ENCODE measurements at regions of chr12 and their contacts with region 1.

Region 1: GRCh38 chr12:98644711-98645402 is at the starts of genes APAF1 and IKBIP:
- DNase-seq: peak; percentile 94 to 98 (median 96)
- H3K4me3 ChIP-seq: peak within 1 kb of the TSS; percentile 92 to 93
- H3K4me3 Mint-ChIP-seq: peak within 1 kb of the TSS; percentile 97 to 99 (median 98)
- H3K27ac ChIP-seq: peak within 1 kb of the TSS; percentile 73
- H3K27ac Mint-ChIP-seq: peak within 1 kb of the TSS; percentile 82 to 97 (median 96)
- H3K4me1 ChIP-seq: peaks cover 24% of the 10 kb centered on the region
- H3K4me1 Mint-ChIP-seq: peaks cover 14 to 40% (median 20%) of the 10 kb centered on the region in 4 donors
- H3K27me3 ChIP-seq: no peaks in the 10 kb centered on the region
- H3K27me3 Mint-ChIP-seq: no peaks in the 10 kb centered on the region
- total RNA-seq, gene APAF1: 30.8 to 32.2 TPM
- total RNA-seq, gene IKBIP: 7.7 to 8.2 TPM

Region 2: GRCh38 chr12:98319716-98320425 is 325.0 kb before region 1 on chr12:
- CTCF ChIA-PET with region 1: no interaction called
- POLR2A ChIA-PET with region 1: no interaction called
- intact Hi-C with region 1: no loop called
- DNase-seq: no peak
- H3K4me3 ChIP-seq: no peak overlapping the region
- H3K4me3 Mint-ChIP-seq: no peak overlapping the region
- H3K27ac ChIP-seq: no peak overlapping the region
- H3K27ac Mint-ChIP-seq: no peak overlapping the region
- H3K4me1 ChIP-seq: no peaks in the 10 kb centered on the region
- H3K4me1 Mint-ChIP-seq: no peaks in the 10 kb centered on the region
- H3K27me3 ChIP-seq: no peaks in the 10 kb centered on the region
- H3K27me3 Mint-ChIP-seq: peaks cover 0 to 2% of the 10 kb centered on the region in 2 donors

Region 3: GRCh38 chr12:98397316-98398105 is 247.3 kb before region 1 on chr12:
- CTCF ChIA-PET with region 1: no interaction called
- POLR2A ChIA-PET with region 1: no interaction called
- intact Hi-C with region 1: no loop called
- DNase-seq: peak; percentile 78 to 80 (median 79)
- H3K4me3 ChIP-seq: peak overlapping the region in 1 of 2 donors; percentile 46
- H3K4me3 Mint-ChIP-seq: peak overlapping the region; percentile 84 to 93 (median 88)
- H3K27ac ChIP-seq: peak overlapping the region; percentile 35
- H3K27ac Mint-ChIP-seq: peak overlapping the region; percentile 61 to 93 (median 88)
- H3K4me1 ChIP-seq: peaks cover 22% of the 10 kb centered on the region
- H3K4me1 Mint-ChIP-seq: peaks cover 24 to 39% (median 27%) of the 10 kb centered on the region in 4 donors
- H3K27me3 ChIP-seq: no peaks in the 10 kb centered on the region
- H3K27me3 Mint-ChIP-seq: no peaks in the 10 kb centered on the region

Region 4: DNA sequence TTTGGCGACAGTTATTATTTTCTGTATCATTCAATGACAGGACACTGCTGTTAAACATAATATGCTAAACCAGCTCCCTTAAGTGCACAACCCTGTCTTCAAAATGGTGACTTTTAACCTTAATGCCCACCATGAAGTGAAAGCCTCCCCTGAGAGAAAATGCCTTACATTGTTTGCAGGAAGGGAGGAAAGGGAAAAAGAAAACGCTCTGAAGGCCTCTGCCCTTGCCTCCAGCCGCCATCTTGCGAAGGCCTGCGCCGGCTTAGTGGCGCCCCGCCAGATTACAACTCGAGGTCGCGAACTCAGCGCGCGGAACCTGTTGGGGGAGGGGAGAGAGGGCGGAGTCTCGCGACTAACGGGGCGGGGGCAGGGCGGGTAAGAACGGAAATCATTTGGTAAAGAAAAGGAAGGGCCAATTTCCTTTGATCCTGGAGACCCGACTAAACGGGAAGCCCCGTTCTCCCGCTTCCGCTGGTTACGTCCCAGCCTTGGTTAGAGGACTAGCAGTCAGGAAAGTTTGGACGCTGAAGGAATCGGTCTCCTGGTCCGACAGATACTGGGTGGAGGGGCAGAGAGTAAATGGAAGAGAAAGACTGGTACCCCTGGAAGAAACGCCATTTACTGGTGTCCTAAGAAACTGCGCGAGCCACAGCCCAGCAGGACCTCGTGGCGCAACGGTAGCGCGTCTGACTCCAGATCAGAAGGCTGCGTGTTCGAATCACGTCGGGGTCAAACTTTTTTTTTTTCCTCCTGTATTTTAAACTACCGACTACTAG is 141.1 kb before region 1 on chr12:
- CTCF ChIA-PET with region 1: no interaction called
- POLR2A ChIA-PET with region 1: interaction called, 4 read pairs
- intact Hi-C with region 1: loop called (anchors 1 kb)
- DNase-seq: peak; percentile 90 to 94 (median 93)
- H3K4me3 ChIP-seq: peak overlapping the region; percentile 72 to 93
- H3K4me3 Mint-ChIP-seq: peak overlapping the region; percentile 95 to 99 (median 98)
- H3K27ac ChIP-seq: peak overlapping the region; percentile 85
- H3K27ac Mint-ChIP-seq: peak overlapping the region; percentile 98 to 100 (median 100)
- H3K4me1 ChIP-seq: peaks cover 16% of the 10 kb centered on the region
- H3K4me1 Mint-ChIP-seq: peaks cover 17 to 42% (median 29%) of the 10 kb centered on the region in 4 donors
- H3K27me3 ChIP-seq: no peaks in the 10 kb centered on the region
- H3K27me3 Mint-ChIP-seq: peaks cover 4 to 15% of the 10 kb centered on the region in 2 donors

Region 5: GRCh38 chr12:98686603-98687002 is 41.7 kb after region 1 on chr12:
- CTCF ChIA-PET with region 1: no interaction called
- POLR2A ChIA-PET with region 1: no interaction called
- intact Hi-C with region 1: no loop called
- DNase-seq: no peak
- H3K4me3 ChIP-seq: no peak overlapping the region
- H3K4me3 Mint-ChIP-seq: no peak overlapping the region
- H3K27ac ChIP-seq: no peak overlapping the region
- H3K27ac Mint-ChIP-seq: no peak overlapping the region
- H3K4me1 ChIP-seq: no peaks in the 10 kb centered on the region
- H3K4me1 Mint-ChIP-seq: peaks cover 0 to 11% (median 5%) of the 10 kb centered on the region in 4 donors
- H3K27me3 ChIP-seq: no peaks in the 10 kb centered on the region
- H3K27me3 Mint-ChIP-seq: no peaks in the 10 kb centered on the region

Region 6: DNA sequence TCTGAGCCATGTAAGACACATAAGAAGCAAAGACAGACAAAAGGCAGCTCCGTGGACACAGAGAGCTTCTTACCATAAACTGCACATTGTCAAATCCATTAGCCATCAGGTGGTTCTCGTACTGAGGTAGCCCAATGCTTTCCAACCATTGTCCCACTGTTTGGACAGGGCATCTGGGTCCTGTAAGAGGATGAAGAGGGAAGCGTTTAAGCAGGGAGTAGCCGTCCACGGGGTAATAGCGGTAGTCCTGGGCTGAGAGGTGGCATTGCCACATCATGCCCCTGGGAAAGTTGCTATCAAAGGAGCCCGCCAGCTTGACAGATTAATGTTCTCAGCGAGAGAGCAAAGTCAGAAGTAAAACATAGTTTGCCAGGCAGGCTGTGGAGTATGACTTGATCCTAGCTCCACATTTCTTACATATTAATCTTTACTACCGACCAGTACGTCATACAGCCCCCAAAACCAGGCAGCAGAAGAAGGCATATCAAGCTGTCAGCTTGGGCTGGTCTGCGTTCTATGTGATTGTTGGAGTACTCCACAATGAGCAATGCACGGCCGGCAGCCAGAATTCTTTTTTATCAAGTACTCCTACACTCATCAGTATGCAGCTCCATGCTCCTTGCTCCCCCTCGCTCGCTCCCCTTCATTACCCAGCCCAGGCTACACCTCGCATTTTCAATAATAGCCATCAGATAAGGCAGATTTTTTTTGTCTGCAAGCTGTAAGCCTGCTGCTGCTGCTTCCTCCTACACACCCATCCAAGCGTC is 509.5 kb after region 1 on chr12:
- CTCF ChIA-PET with region 1: no interaction called
- POLR2A ChIA-PET with region 1: no interaction called
- intact Hi-C with region 1: no loop called
- DNase-seq: no peak
- H3K4me3 ChIP-seq: no peak overlapping the region
- H3K4me3 Mint-ChIP-seq: no peak overlapping the region
- H3K27ac ChIP-seq: no peak overlapping the region
- H3K27ac Mint-ChIP-seq: no peak overlapping the region
- H3K4me1 ChIP-seq: no peaks in the 10 kb centered on the region
- H3K4me1 Mint-ChIP-seq: no peaks in the 10 kb centered on the region
- H3K27me3 ChIP-seq: no peaks in the 10 kb centered on the region
- H3K27me3 Mint-ChIP-seq: no peaks in the 10 kb centered on the region